B cell (primary cell): ENCODE measurements at regions of chr10 and their contacts with region 1.

Region 1: DNA sequence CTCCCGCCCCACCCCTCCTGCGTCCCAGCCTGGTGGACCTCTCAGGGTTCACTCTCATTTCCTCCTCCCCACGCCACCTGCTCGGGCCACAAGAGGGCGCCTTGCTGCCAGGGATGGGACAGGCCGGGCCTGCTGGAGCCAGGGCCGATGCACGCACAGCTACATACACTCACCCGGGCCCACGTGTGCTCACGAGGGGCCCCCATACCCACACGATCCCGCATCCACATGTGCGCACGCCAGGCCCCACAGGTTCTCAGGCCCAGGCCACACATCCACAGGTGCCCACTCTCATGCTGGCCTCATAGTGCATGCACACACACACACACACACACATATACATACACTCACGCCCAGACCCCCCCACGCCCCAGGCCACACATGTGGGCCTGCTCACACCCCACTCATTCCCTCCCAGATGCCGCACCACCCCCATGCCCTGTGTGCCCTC is 68.6 kb downstream of the LHPP start:
- DNase-seq: peak; percentile 93
- ATAC-seq: peak; percentile 86
- H3K4me3 ChIP-seq: no peak overlapping the region
- H3K4me3 Mint-ChIP-seq: peak overlapping the region; percentile 74
- H3K27ac ChIP-seq: no peak overlapping the region
- H3K27ac Mint-ChIP-seq: peak overlapping the region; percentile 92
- H3K4me1 ChIP-seq: peaks cover 37 to 53% of the 10 kb centered on the region in 2 donors
- H3K4me1 Mint-ChIP-seq: peaks cover 50% of the 10 kb centered on the region
- H3K27me3 ChIP-seq: no peaks in the 10 kb centered on the region
- H3K27me3 Mint-ChIP-seq: no peaks in the 10 kb centered on the region
- CTCF ChIP-seq: peak; percentile 86

Region 2: GRCh38 chr10:124076148-124076733 is 454.0 kb before region 1 on chr10:
- CTCF ChIA-PET with region 1: no interaction called
- POLR2A ChIA-PET with region 1: no interaction called
- intact Hi-C with region 1: no loop called
- DNase-seq: peak; percentile 14
- ATAC-seq: no peak
- H3K4me3 ChIP-seq: no peak overlapping the region
- H3K4me3 Mint-ChIP-seq: peak overlapping the region; percentile 16
- H3K27ac ChIP-seq: peak overlapping the region in 1 of 2 donors; percentile 21
- H3K27ac Mint-ChIP-seq: peak overlapping the region; percentile 78
- H3K4me1 ChIP-seq: peaks cover 81 to 87% of the 10 kb centered on the region in 2 donors
- H3K4me1 Mint-ChIP-seq: peaks cover 90% of the 10 kb centered on the region
- H3K27me3 ChIP-seq: no peaks in the 10 kb centered on the region
- H3K27me3 Mint-ChIP-seq: no peaks in the 10 kb centered on the region
- CTCF ChIP-seq: no peak

Region 3: GRCh38 chr10:124508070-124508667 is 22.1 kb before region 1 on chr10:
- CTCF ChIA-PET with region 1: no interaction called
- POLR2A ChIA-PET with region 1: no interaction called
- intact Hi-C with region 1: no loop called
- DNase-seq: no peak
- ATAC-seq: no peak
- H3K4me3 ChIP-seq: no peak overlapping the region
- H3K4me3 Mint-ChIP-seq: no peak overlapping the region
- H3K27ac ChIP-seq: no peak overlapping the region
- H3K27ac Mint-ChIP-seq: no peak overlapping the region
- H3K4me1 ChIP-seq: no peaks in the 10 kb centered on the region
- H3K4me1 Mint-ChIP-seq: no peaks in the 10 kb centered on the region
- H3K27me3 ChIP-seq: no peaks in the 10 kb centered on the region
- H3K27me3 Mint-ChIP-seq: no peaks in the 10 kb centered on the region
- CTCF ChIP-seq: no peak

Region 4: DNA sequence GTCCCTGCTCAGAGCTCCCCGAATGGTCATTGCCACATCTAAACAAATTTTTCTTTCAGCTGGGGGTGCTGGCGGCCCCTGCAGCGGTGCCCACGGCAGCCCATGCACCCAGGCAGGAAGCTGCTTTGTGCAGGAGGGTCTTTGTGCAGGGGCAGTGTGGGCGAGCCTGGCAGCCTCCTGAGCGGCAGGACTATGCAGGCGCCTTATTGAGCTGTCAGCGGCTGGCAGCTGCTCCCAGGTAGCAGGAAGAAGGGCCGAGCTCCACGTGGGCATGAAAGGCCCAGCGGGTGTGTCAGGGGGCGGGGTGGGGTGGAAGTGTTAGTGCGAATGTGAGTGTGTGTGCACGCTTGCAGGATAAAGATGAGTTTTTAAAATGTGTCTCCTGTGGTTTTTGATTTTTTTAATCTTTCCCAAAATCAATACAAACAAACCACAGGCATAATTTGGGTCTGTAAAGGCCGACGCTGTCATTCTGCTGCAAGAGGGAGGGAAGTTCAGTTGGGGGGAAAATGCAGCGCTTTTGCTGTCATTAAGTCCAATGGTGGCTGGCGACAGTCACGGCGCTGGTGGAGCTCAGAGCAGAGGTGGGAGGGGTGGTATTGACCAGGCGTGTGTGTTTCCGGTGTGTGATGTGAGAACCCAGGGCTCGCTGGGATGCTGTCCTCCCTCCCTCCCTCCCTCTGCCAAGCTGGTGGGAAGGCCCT is 15.3 kb after region 1 on chr10:
- CTCF ChIA-PET with region 1: interaction called, 10 read pairs
- POLR2A ChIA-PET with region 1: interaction called, 7 read pairs
- intact Hi-C with region 1: no loop called
- DNase-seq: no peak
- ATAC-seq: no peak
- H3K4me3 ChIP-seq: peak overlapping the region in 4 of 5 experiments; percentile 13 to 34 (median 22)
- H3K4me3 Mint-ChIP-seq: peak overlapping the region; percentile 78
- H3K27ac ChIP-seq: peak overlapping the region; percentile 64 to 70
- H3K27ac Mint-ChIP-seq: peak overlapping the region; percentile 91
- H3K4me1 ChIP-seq: peaks cover 98 to 100% of the 10 kb centered on the region in 2 donors
- H3K4me1 Mint-ChIP-seq: peaks cover 91% of the 10 kb centered on the region
- H3K27me3 ChIP-seq: no peaks in the 10 kb centered on the region
- H3K27me3 Mint-ChIP-seq: no peaks in the 10 kb centered on the region
- CTCF ChIP-seq: no peak

Region 5: DNA sequence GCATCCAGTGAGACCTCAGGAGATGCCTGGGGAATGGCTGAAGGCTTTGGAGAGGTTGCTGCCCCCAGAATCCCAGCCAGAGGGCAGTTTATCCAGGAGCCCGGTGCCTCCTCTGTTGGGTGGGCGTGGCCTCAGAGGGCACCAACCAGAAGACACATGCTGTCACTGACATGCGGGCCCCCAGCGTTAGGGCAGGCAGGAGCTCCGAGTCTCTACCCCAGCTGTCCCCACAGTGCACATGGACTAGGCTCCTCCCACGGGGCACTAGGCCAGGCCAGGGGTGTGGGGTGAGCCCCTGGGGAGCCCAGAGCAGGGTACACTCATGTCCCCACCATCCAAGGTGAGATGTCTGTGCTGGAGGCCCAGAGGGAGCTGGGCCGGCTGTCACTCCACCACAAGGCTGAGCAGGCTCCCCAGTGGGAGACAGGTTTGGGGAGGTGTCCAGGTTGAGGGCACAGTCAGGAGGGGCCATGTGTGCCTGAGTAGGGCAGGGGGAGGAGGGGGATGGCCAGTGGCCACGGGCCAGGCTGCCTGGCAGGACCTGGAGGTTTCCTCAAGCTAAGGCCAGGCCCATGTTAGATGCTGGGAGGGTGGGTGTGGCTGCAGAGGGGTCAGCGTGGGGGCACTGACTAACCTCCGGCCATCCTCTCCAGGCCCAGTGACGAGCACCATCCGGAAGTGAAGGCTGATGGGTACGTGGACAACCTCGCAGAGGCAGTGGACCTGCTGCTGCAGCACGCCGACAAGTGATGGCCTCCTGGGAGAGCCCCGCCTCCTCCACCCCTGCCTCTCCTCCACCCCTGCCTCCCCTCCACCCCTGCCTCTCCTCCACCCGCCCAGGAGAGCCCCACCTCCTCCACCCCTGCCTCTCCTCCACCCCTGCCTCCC is 82.6 kb after region 1 on chr10:
- CTCF ChIA-PET with region 1: interaction called, 17 read pairs
- POLR2A ChIA-PET with region 1: interaction called, 3 read pairs
- intact Hi-C with region 1: no loop called
- DNase-seq: peak; percentile 70
- ATAC-seq: peak; percentile 63
- H3K4me3 ChIP-seq: no peak overlapping the region
- H3K4me3 Mint-ChIP-seq: peak overlapping the region; percentile 57
- H3K27ac ChIP-seq: peak overlapping the region; percentile 86 to 97
- H3K27ac Mint-ChIP-seq: peak overlapping the region; percentile 90
- H3K4me1 ChIP-seq: peaks cover 79 to 96% of the 10 kb centered on the region in 2 donors
- H3K4me1 Mint-ChIP-seq: peaks cover 77% of the 10 kb centered on the region
- H3K27me3 ChIP-seq: no peaks in the 10 kb centered on the region
- H3K27me3 Mint-ChIP-seq: no peaks in the 10 kb centered on the region
- CTCF ChIP-seq: no peak

Region 6: DNA sequence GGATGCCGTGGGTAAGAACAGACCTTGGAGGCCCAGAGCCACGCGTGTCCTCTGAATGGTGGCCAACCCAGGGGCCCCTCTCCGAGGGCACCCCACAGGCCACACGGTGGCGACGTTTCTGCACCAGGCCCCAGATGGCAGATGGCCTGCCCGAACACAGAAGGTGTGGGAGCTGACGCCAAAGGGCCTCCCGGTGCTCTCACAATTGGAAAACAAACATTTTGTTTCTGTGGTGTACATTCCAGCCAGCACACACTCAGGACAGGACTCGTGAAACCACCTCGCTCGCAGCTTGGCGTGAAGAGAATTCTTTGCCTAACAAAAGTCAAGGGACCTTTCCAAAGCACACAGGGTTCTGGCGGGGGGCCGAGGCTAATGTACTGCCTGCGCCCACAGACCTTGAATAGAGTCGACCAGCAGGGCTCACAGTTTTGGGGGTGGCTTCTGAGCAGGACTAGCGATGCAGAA is 101.9 kb after region 1 on chr10:
- CTCF ChIA-PET with region 1: interaction called, 100 read pairs
- POLR2A ChIA-PET with region 1: interaction called, 6 read pairs
- intact Hi-C with region 1: no loop called
- DNase-seq: peak; percentile 37
- ATAC-seq: no peak
- H3K4me3 ChIP-seq: no peak overlapping the region
- H3K4me3 Mint-ChIP-seq: peak overlapping the region; percentile 7
- H3K27ac ChIP-seq: peak overlapping the region; percentile 28 to 97
- H3K27ac Mint-ChIP-seq: peak overlapping the region; percentile 99
- H3K4me1 ChIP-seq: peaks cover 86 to 92% of the 10 kb centered on the region in 2 donors
- H3K4me1 Mint-ChIP-seq: peaks cover 88% of the 10 kb centered on the region
- H3K27me3 ChIP-seq: no peaks in the 10 kb centered on the region
- H3K27me3 Mint-ChIP-seq: no peaks in the 10 kb centered on the region
- CTCF ChIP-seq: no peak

Region 7: DNA sequence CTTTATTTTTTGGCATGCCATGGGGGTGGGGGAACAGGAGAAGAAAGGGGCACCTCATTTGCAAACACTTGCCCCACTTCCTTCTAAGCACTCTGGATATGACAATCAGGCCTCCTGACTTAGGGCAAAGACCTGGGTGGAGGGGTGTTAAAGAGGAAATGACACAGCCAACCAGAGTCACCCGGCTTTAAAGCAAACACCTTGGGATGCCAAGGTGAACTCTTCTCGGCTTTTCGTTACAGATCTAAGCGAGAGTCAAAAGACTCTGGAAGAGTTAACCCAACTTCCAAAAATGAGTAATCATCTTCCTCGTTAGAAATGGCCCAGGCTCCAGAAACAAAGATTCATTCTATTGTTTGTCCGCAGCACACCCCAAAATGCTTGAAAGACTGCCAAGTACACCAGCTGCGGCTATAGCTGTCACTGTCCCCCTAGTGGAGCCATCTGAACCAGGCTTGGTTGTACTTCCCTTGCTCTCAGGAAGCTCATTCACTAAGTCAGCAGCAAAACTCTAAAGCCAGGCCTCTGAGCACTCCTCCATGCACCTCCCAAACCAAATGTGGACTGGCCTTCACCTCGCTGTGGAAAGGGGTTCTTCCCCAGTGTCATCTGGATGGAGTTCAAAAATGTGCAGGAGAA is 189.1 kb after region 1 on chr10:
- CTCF ChIA-PET with region 1: interaction called, 157 read pairs
- POLR2A ChIA-PET with region 1: interaction called, 6 read pairs
- intact Hi-C with region 1: no loop called
- DNase-seq: peak; percentile 90
- ATAC-seq: peak; percentile 48
- H3K4me3 ChIP-seq: peak overlapping the region in 3 of 5 experiments; percentile 17 to 37 (median 33)
- H3K4me3 Mint-ChIP-seq: peak overlapping the region; percentile 82
- H3K27ac ChIP-seq: peak overlapping the region; percentile 92 to 98
- H3K27ac Mint-ChIP-seq: peak overlapping the region; percentile 85
- H3K4me1 ChIP-seq: peaks cover 97% of the 10 kb centered on the region in 2 donors
- H3K4me1 Mint-ChIP-seq: peaks cover 91% of the 10 kb centered on the region
- H3K27me3 ChIP-seq: no peaks in the 10 kb centered on the region
- H3K27me3 Mint-ChIP-seq: no peaks in the 10 kb centered on the region
- CTCF ChIP-seq: peak; percentile 77

Region 8: GRCh38 chr10:124916585-124917427 is 386.6 kb after region 1 on chr10:
- CTCF ChIA-PET with region 1: no interaction called
- POLR2A ChIA-PET with region 1: no interaction called
- intact Hi-C with region 1: loop called (anchors 1 kb)
- DNase-seq: peak; percentile 98
- ATAC-seq: peak; percentile 89
- H3K4me3 ChIP-seq: peak overlapping the region; percentile 63 to 87 (median 79)
- H3K4me3 Mint-ChIP-seq: peak overlapping the region; percentile 90
- H3K27ac ChIP-seq: peak overlapping the region; percentile 81 to 87
- H3K27ac Mint-ChIP-seq: peak overlapping the region; percentile 90
- H3K4me1 ChIP-seq: peaks cover 18 to 20% of the 10 kb centered on the region in 2 donors
- H3K4me1 Mint-ChIP-seq: peaks cover 37% of the 10 kb centered on the region
- H3K27me3 ChIP-seq: peaks cover 0 to 5% (median 3%) of the 10 kb centered on the region in 4 experiments
- H3K27me3 Mint-ChIP-seq: peaks cover 9% of the 10 kb centered on the region
- CTCF ChIP-seq: no peak